Calu3 (cell line): ENCODE measurements at regions of chr6 and their contacts with region 1.

Region 1: GRCh38 chr6:6724539-6725467 is 136.3 kb downstream of the LY86 start:
- DNase-seq: peak; percentile 58
- H3K4me3 Mint-ChIP-seq: peak overlapping the region; percentile 62
- H3K27ac Mint-ChIP-seq: peak overlapping the region; percentile 77
- H3K4me1 Mint-ChIP-seq: peaks cover 37% of the 10 kb centered on the region
- H3K27me3 Mint-ChIP-seq: no peaks in the 10 kb centered on the region
- CTCF ChIP-seq: peak; percentile 47

Region 2: DNA sequence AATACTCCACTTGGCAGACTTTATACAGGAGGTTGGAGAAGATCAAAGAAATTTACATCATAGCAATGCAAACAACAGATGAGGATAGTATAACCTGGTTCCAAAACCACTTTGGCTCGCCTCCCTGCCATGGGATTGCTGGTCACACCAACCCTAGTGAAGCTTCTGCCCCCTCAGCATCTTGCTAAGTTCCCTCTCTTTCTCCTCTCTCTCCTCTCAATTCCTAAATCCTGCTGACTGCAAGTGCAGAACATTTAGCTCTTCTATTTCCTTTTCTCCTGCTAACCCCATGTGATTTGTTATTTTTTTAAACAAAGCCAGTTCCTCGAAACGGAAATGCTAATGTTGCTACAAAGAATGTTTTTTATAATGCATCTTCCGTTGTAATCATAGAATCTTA is 186.5 kb before region 1 on chr6:
- CTCF ChIA-PET with region 1: no interaction called
- intact Hi-C with region 1: no loop called
- DNase-seq: no peak
- H3K4me3 Mint-ChIP-seq: no peak overlapping the region
- H3K27ac Mint-ChIP-seq: no peak overlapping the region
- H3K4me1 Mint-ChIP-seq: no peaks in the 10 kb centered on the region
- H3K27me3 Mint-ChIP-seq: peaks cover 66% of the 10 kb centered on the region
- CTCF ChIP-seq: no peak

Region 3: DNA sequence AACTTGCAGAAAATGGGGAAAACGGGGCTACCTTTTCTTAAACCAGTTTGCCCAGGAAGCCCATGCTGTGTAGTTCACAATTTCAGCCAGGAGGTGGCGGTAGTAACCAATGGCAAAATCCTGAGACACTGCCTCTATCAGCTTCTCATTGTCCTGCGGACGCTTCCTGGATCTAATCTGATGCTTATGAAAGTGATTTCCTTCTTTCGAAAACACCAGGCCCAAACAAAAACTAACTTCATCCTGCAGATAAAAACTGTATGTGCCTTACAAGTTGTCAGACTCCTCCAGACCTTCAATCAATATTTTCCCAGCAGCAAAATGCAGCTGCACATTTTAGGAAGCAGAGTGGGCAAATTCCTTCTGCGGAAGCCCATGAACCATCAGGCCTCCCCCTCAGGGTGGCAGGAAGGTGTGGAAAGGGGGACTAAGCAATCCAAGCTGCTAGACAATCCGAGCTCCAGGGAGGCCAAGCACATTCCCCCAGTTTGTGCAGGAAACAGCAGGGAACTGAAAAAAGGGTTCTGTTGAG is 47.8 kb before region 1 on chr6:
- CTCF ChIA-PET with region 1: interaction called, 3 read pairs
- intact Hi-C with region 1: loop called (anchors 2 kb)
- DNase-seq: peak; percentile 71
- H3K4me3 Mint-ChIP-seq: no peak overlapping the region
- H3K27ac Mint-ChIP-seq: no peak overlapping the region
- H3K4me1 Mint-ChIP-seq: peaks cover 20% of the 10 kb centered on the region
- H3K27me3 Mint-ChIP-seq: peaks cover 12% of the 10 kb centered on the region
- CTCF ChIP-seq: peak; percentile 76

Region 4: GRCh38 chr6:6712258-6712999 is 12.4 kb before region 1 on chr6:
- CTCF ChIA-PET with region 1: interaction called, 10 read pairs
- intact Hi-C with region 1: no loop called
- DNase-seq: peak; percentile 64
- H3K4me3 Mint-ChIP-seq: peak overlapping the region; percentile 41
- H3K27ac Mint-ChIP-seq: no peak overlapping the region
- H3K4me1 Mint-ChIP-seq: peaks cover 19% of the 10 kb centered on the region
- H3K27me3 Mint-ChIP-seq: peaks cover 14% of the 10 kb centered on the region
- CTCF ChIP-seq: no peak